CD8-positive, alpha-beta T cell (primary cell): ENCODE measurements at regions of chr6 and their contacts with region 1.

Region 1: GRCh38 chr6:152184917-152185574 is 377.6 kb downstream of the ESR1 start:
- DNase-seq: peak in 4 of 9 experiments; percentile 16 to 69 (median 41)
- ATAC-seq: peak; percentile 71
- H3K4me3 ChIP-seq: peak overlapping the region; percentile 47 to 51
- H3K4me3 Mint-ChIP-seq: peak overlapping the region; percentile 91
- H3K27ac ChIP-seq: peak overlapping the region; percentile 80 to 92
- H3K27ac Mint-ChIP-seq: peak overlapping the region; percentile 99
- H3K4me1 ChIP-seq: peaks cover 48% of the 10 kb centered on the region
- H3K4me1 Mint-ChIP-seq: peaks cover 74% of the 10 kb centered on the region
- H3K27me3 ChIP-seq: no peaks in the 10 kb centered on the region
- H3K27me3 Mint-ChIP-seq: no peaks in the 10 kb centered on the region
- CTCF ChIP-seq: no peak

Region 2: GRCh38 chr6:152170705-152171667 is 14.1 kb before region 1 on chr6:
- CTCF ChIA-PET with region 1: interaction called, 4 read pairs
- POLR2A ChIA-PET with region 1: interaction called, 23 read pairs
- intact Hi-C with region 1: loop called (anchors 1 kb)
- DNase-seq: peak in 5 of 9 experiments; percentile 23 to 85 (median 56)
- ATAC-seq: peak; percentile 81
- H3K4me3 ChIP-seq: peak overlapping the region in 1 of 2 experiments; percentile 22
- H3K4me3 Mint-ChIP-seq: peak overlapping the region; percentile 76
- H3K27ac ChIP-seq: peak overlapping the region; percentile 40 to 84
- H3K27ac Mint-ChIP-seq: peak overlapping the region; percentile 96
- H3K4me1 ChIP-seq: peaks cover 13% of the 10 kb centered on the region
- H3K4me1 Mint-ChIP-seq: peaks cover 56% of the 10 kb centered on the region
- H3K27me3 ChIP-seq: no peaks in the 10 kb centered on the region
- H3K27me3 Mint-ChIP-seq: no peaks in the 10 kb centered on the region
- CTCF ChIP-seq: no peak

Region 3: GRCh38 chr6:152201120-152201519 is 16.1 kb after region 1 on chr6:
- CTCF ChIA-PET with region 1: interaction called, 3 read pairs
- POLR2A ChIA-PET with region 1: interaction called, 13 read pairs
- intact Hi-C with region 1: loop called in 1 of 2 experiments (anchors 2 kb)
- DNase-seq: no peak
- ATAC-seq: no peak
- H3K4me3 ChIP-seq: no peak overlapping the region
- H3K4me3 Mint-ChIP-seq: no peak overlapping the region
- H3K27ac ChIP-seq: no peak overlapping the region
- H3K27ac Mint-ChIP-seq: no peak overlapping the region
- H3K4me1 ChIP-seq: no peaks in the 10 kb centered on the region
- H3K4me1 Mint-ChIP-seq: peaks cover 9% of the 10 kb centered on the region
- H3K27me3 ChIP-seq: no peaks in the 10 kb centered on the region
- H3K27me3 Mint-ChIP-seq: no peaks in the 10 kb centered on the region
- CTCF ChIP-seq: no peak

Region 4: GRCh38 chr6:152206072-152206818 is 21.2 kb after region 1 on chr6:
- CTCF ChIA-PET with region 1: interaction called, 3 read pairs
- POLR2A ChIA-PET with region 1: interaction called, 13 read pairs
- intact Hi-C with region 1: loop called in 1 of 2 experiments (anchors 2 kb)
- DNase-seq: peak in 7 of 9 experiments; percentile 9 to 65 (median 50)
- ATAC-seq: peak; percentile 49
- H3K4me3 ChIP-seq: no peak overlapping the region
- H3K4me3 Mint-ChIP-seq: no peak overlapping the region
- H3K27ac ChIP-seq: no peak overlapping the region
- H3K27ac Mint-ChIP-seq: peak overlapping the region; percentile 3
- H3K4me1 ChIP-seq: no peaks in the 10 kb centered on the region
- H3K4me1 Mint-ChIP-seq: peaks cover 6% of the 10 kb centered on the region
- H3K27me3 ChIP-seq: no peaks in the 10 kb centered on the region
- H3K27me3 Mint-ChIP-seq: no peaks in the 10 kb centered on the region
- CTCF ChIP-seq: peak; percentile 51

Region 5: GRCh38 chr6:152232501-152233151 is 47.6 kb after region 1 on chr6:
- CTCF ChIA-PET with region 1: interaction called, 5 read pairs
- POLR2A ChIA-PET with region 1: interaction called, 5 read pairs
- intact Hi-C with region 1: loop called (anchors 2 to 5 kb)
- DNase-seq: peak in 1 of 9 experiments; percentile 12
- ATAC-seq: peak; percentile 27
- H3K4me3 ChIP-seq: no peak overlapping the region
- H3K4me3 Mint-ChIP-seq: peak overlapping the region; percentile 66
- H3K27ac ChIP-seq: no peak overlapping the region
- H3K27ac Mint-ChIP-seq: peak overlapping the region; percentile 77
- H3K4me1 ChIP-seq: peaks cover 18% of the 10 kb centered on the region
- H3K4me1 Mint-ChIP-seq: peaks cover 24% of the 10 kb centered on the region
- H3K27me3 ChIP-seq: no peaks in the 10 kb centered on the region
- H3K27me3 Mint-ChIP-seq: no peaks in the 10 kb centered on the region
- CTCF ChIP-seq: no peak

Region 6: GRCh38 chr6:152301764-152302568 is 116.9 kb after region 1 on chr6:
- CTCF ChIA-PET with region 1: no interaction called
- POLR2A ChIA-PET with region 1: interaction called, 8 read pairs
- intact Hi-C with region 1: loop called (anchors 2 to 5 kb)
- DNase-seq: peak; percentile 71 to 94 (median 87)
- ATAC-seq: peak; percentile 97
- H3K4me3 ChIP-seq: peak overlapping the region; percentile 83 to 88
- H3K4me3 Mint-ChIP-seq: peak overlapping the region; percentile 100
- H3K27ac ChIP-seq: peak overlapping the region; percentile 82 to 85
- H3K27ac Mint-ChIP-seq: peak overlapping the region; percentile 100
- H3K4me1 ChIP-seq: peaks cover 21% of the 10 kb centered on the region
- H3K4me1 Mint-ChIP-seq: peaks cover 41% of the 10 kb centered on the region
- H3K27me3 ChIP-seq: no peaks in the 10 kb centered on the region
- H3K27me3 Mint-ChIP-seq: no peaks in the 10 kb centered on the region
- CTCF ChIP-seq: peak; percentile 77

Region 7: DNA sequence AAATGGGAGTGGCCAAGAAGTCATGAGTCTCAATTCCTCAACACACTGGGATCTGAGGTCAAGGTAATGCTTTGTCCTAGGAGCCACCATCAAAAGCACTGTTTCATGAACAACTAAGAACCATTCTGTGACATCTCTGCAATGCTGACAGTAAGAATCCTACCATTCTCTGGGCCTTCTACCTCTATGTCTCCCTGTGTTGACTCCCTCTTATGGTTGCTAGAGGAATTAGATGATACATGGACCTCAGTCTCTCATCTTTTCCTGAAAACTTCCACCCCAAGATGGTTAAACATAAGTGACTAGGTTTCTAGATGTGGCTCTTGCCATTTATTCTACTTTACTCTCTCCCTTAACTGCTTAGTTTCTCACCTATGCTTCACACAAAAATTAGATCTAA is 808.4 kb after region 1 on chr6:
- CTCF ChIA-PET with region 1: no interaction called
- POLR2A ChIA-PET with region 1: no interaction called
- intact Hi-C with region 1: loop called in 1 of 2 experiments (anchors 10 kb)
- DNase-seq: peak in 1 of 9 experiments; percentile 10
- ATAC-seq: peak; percentile 49
- H3K4me3 ChIP-seq: no peak overlapping the region
- H3K4me3 Mint-ChIP-seq: no peak overlapping the region
- H3K27ac ChIP-seq: peak overlapping the region in 1 of 2 experiments; percentile 16
- H3K27ac Mint-ChIP-seq: peak overlapping the region; percentile 67
- H3K4me1 ChIP-seq: peaks cover 14% of the 10 kb centered on the region
- H3K4me1 Mint-ChIP-seq: peaks cover 38% of the 10 kb centered on the region
- H3K27me3 ChIP-seq: no peaks in the 10 kb centered on the region
- H3K27me3 Mint-ChIP-seq: no peaks in the 10 kb centered on the region
- CTCF ChIP-seq: no peak